ENCODE measurements at regions of chr13 and their contacts with region 1.

Region 1: GRCh38 chr13:30132623-30133553 is 174.5 kb downstream of the KATNAL1 start:
- DNase-seq: peak; percentile 99
- H3K4me3 Mint-ChIP-seq: no peak overlapping the region
- H3K27ac Mint-ChIP-seq: no peak overlapping the region
- H3K4me1 Mint-ChIP-seq: peaks cover 7% of the 10 kb centered on the region
- H3K27me3 Mint-ChIP-seq: no peaks in the 10 kb centered on the region

Region 2: GRCh38 chr13:30114571-30115256 is 18.2 kb before region 1 on chr13:
- CTCF ChIA-PET with region 1: interaction called, 61 read pairs
- intact Hi-C with region 1: no loop called
- DNase-seq: peak; percentile 94
- H3K4me3 Mint-ChIP-seq: peak overlapping the region; percentile 69
- H3K27ac Mint-ChIP-seq: no peak overlapping the region
- H3K4me1 Mint-ChIP-seq: peaks cover 36% of the 10 kb centered on the region
- H3K27me3 Mint-ChIP-seq: no peaks in the 10 kb centered on the region

Region 3: GRCh38 chr13:30169442-30169841 is 36.6 kb after region 1 on chr13:
- CTCF ChIA-PET with region 1: interaction called, 14 read pairs
- intact Hi-C with region 1: no loop called
- DNase-seq: no peak
- H3K4me3 Mint-ChIP-seq: no peak overlapping the region
- H3K27ac Mint-ChIP-seq: no peak overlapping the region
- H3K4me1 Mint-ChIP-seq: peaks cover 32% of the 10 kb centered on the region
- H3K27me3 Mint-ChIP-seq: no peaks in the 10 kb centered on the region

Region 4: DNA sequence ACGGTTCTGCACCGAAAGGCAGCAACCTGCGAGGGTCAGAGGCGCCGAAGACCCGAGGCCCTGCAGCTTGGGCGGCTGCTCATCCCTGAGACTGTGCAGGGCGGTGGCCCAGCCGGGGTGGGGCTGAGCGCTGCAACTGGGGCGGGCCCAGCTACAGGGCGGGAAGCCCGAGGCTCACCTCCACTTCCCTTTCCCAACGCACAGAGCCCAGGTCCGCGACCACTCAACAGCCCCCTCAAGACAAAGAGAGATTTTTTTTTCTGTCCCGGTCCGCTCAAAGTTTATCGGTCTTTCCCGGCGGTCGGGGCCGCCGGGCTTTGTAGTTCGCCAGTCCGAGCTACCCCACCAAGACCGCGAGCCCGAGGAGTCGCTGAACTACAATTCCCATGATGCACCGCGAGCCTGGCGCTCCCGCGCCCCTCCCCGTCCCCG is 173.9 kb after region 1 on chr13:
- CTCF ChIA-PET with region 1: interaction called, 10 read pairs
- intact Hi-C with region 1: no loop called
- DNase-seq: peak; percentile 94
- H3K4me3 Mint-ChIP-seq: peak overlapping the region; percentile 83
- H3K27ac Mint-ChIP-seq: peak overlapping the region; percentile 76
- H3K4me1 Mint-ChIP-seq: peaks cover 14% of the 10 kb centered on the region
- H3K27me3 Mint-ChIP-seq: no peaks in the 10 kb centered on the region

Region 5: DNA sequence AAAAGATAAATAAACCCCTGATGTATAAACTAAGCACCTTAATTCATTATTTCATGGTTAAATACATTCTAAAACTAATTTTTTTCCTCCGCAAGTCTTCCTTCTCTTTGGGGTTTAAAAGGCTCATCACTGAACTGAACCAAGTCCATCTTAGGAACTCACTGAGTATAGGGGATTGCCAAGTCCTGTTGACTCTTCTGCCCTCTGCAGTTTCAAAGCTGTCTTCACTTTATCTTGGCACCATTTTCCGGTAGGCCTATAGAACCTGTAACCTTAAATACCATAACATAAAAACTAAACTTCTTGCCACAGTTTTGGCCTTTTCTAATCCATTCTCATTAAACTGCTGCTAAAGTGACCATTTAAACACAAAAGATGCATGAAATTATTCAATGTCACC is 418.3 kb after region 1 on chr13:
- CTCF ChIA-PET with region 1: interaction called, 3 read pairs
- intact Hi-C with region 1: loop called (anchors 1 kb)
- DNase-seq: peak; percentile 30
- H3K4me3 Mint-ChIP-seq: no peak overlapping the region
- H3K27ac Mint-ChIP-seq: no peak overlapping the region
- H3K4me1 Mint-ChIP-seq: peaks cover 2% of the 10 kb centered on the region
- H3K27me3 Mint-ChIP-seq: no peaks in the 10 kb centered on the region

Region 6: GRCh38 chr13:30802953-30803478 is 670.1 kb after region 1 on chr13:
- CTCF ChIA-PET with region 1: interaction called, 4 read pairs
- intact Hi-C with region 1: loop called (anchors 1 kb)
- DNase-seq: peak; percentile 88
- H3K4me3 Mint-ChIP-seq: peak overlapping the region; percentile 38
- H3K27ac Mint-ChIP-seq: no peak overlapping the region
- H3K4me1 Mint-ChIP-seq: peaks cover 5% of the 10 kb centered on the region
- H3K27me3 Mint-ChIP-seq: no peaks in the 10 kb centered on the region